BJ (cell line): ENCODE measurements at regions of chr19 and their contacts with region 1.

Region 1: GRCh38 chr19:4638828-4639530 is at the start of gene TNFAIP8L1:
- DNase-seq: peak; percentile 25
- H3K4me3 ChIP-seq: peak within 1 kb of the TSS; percentile 72
- H3K27me3 ChIP-seq: no peaks in the 10 kb centered on the region
- CTCF ChIP-seq: no peak
- polyA plus RNA-seq, gene TNFAIP8L1: 3.7 and 4.8 TPM in 2 replicates

Region 2: DNA sequence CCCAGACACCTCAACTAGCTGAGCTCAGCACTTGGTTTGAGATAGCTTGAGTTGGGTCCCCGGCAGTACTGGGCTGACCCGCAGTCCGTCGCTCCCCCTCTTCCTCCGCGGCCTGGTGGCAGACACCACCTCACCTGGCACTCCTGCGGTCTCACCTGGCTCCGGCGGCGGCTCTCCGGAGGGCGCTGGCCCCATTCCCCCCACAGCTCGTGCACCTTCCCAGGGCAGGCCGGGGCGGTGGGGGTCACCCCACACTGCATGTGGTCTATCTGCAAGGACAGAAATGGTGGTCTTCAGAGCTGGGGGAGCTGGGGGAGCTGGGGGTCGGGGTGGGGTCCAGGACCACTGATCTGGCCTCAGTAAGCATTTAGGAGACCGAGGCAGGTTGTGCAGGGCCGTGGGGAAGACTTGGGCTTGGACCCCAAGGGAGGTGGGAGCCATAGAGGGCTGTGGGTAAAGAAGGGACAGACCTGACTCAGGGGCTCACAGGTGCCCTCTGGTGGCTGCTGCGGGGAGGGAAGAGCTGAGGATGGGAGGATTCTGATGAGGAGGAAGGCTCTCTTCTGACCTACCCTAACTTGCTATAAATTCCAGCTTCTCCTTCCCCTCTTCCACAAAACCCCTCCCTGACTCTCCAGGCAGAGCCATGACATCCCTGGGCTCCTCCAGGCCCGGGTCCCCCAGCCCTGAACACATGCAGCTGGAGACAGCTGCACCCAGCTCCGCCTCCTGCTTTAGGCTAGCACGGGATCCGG is 114.0 kb before region 1 on chr19:
- CTCF ChIA-PET with region 1: interaction called, 18 read pairs
- POLR2A ChIA-PET with region 1: no interaction called
- DNase-seq: no peak
- H3K4me3 ChIP-seq: no peak overlapping the region
- H3K27me3 ChIP-seq: peaks cover 5% of the 10 kb centered on the region
- CTCF ChIP-seq: peak; percentile 89

Region 3: DNA sequence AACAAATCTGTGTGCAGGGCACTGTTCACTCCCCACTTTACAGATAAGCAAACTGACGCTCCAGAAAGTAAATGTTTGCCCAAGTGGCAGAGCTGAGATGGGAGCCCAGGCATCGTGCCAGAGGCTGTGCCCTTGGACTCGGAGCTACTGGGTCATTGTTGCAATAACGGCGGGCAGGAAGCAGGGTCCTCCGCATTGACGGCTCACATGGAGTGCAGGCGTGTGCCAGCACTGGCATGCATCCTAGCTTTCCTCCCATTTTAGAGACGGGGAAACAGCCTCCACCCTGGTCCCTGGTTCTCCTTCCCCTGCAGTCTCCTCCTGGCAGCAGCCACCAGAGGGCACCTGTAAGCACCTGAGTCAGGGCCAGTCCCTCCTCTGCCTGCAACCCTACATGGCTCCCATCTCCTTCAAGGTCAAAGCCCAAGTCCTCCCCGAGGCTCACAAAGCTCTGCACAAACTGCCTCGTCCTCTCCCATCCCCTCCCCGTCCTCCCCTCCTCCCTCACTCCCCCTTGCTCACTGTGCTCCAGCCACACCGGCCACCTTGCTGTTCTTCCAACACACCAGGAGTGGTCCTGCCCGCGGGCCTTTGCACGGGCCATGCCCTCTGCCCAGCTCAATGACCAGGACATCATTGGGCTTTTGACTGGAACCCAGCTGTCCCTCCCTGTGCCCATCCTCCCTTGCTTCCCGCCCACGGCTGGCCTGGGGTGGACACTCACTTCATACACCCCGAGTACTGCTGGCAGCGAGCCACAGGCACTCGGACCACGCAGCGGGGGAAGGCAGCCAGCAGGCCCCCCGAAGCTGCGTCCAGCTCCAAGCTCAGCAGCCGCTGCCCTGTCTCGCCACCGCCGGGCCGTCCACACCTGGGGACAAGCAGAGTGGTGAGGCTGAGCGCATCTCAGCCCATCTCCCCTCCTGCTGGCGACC is 91.4 kb before region 1 on chr19:
- CTCF ChIA-PET with region 1: interaction called, 12 read pairs
- POLR2A ChIA-PET with region 1: no interaction called
- DNase-seq: no peak
- H3K4me3 ChIP-seq: no peak overlapping the region
- H3K27me3 ChIP-seq: no peaks in the 10 kb centered on the region
- CTCF ChIP-seq: peak; percentile 27; the same call in 1 of the 2 replicates

Region 4: GRCh38 chr19:4557971-4558941 is 80.7 kb before region 1 on chr19:
- CTCF ChIA-PET with region 1: interaction called, 38 read pairs
- POLR2A ChIA-PET with region 1: no interaction called
- DNase-seq: no peak
- H3K4me3 ChIP-seq: no peak overlapping the region
- H3K27me3 ChIP-seq: no peaks in the 10 kb centered on the region
- CTCF ChIP-seq: peak; percentile 96

Region 5: DNA sequence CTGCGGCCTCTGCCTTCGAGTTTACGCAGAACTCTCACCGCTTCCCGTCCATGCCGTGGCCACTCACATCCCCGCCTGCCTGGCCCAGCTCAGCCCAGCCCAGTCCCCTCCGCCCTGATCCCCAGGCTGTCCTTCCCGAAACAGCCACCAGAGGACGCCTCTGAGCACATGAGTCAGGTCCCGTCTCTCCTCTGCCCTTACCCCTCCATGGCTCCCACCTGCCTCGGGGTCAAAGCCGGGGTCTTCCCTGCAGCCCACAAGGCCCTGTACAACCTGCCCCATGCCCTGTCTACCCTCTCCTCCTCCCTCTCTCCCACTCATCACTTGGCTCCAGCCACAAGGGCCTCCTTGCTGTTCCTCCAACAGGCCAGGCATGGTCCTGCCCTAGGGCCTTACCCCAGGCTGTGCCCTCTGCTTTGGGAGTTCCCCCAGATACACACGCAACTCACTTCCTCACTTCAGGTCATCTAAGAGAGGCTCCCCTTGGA is 71.4 kb before region 1 on chr19:
- CTCF ChIA-PET with region 1: interaction called, 119 read pairs
- POLR2A ChIA-PET with region 1: no interaction called
- DNase-seq: no peak
- H3K4me3 ChIP-seq: no peak overlapping the region
- H3K27me3 ChIP-seq: no peaks in the 10 kb centered on the region
- CTCF ChIP-seq: peak; percentile 91

Region 6: GRCh38 chr19:4576016-4576933 is 62.7 kb before region 1 on chr19:
- CTCF ChIA-PET with region 1: interaction called, 119 read pairs
- POLR2A ChIA-PET with region 1: no interaction called
- DNase-seq: no peak
- H3K4me3 ChIP-seq: no peak overlapping the region
- H3K27me3 ChIP-seq: peaks cover 16% of the 10 kb centered on the region
- CTCF ChIP-seq: peak; percentile 75

Region 7: GRCh38 chr19:4597975-4598671 is 40.9 kb before region 1 on chr19:
- CTCF ChIA-PET with region 1: interaction called, 10 read pairs
- POLR2A ChIA-PET with region 1: no interaction called
- DNase-seq: no peak
- H3K4me3 ChIP-seq: peak overlapping the region; percentile 23
- H3K27me3 ChIP-seq: peaks cover 15% of the 10 kb centered on the region
- CTCF ChIP-seq: no peak